B cell (primary cell): ENCODE measurements at regions of chr3 and their contacts with region 1.

Region 1: DNA sequence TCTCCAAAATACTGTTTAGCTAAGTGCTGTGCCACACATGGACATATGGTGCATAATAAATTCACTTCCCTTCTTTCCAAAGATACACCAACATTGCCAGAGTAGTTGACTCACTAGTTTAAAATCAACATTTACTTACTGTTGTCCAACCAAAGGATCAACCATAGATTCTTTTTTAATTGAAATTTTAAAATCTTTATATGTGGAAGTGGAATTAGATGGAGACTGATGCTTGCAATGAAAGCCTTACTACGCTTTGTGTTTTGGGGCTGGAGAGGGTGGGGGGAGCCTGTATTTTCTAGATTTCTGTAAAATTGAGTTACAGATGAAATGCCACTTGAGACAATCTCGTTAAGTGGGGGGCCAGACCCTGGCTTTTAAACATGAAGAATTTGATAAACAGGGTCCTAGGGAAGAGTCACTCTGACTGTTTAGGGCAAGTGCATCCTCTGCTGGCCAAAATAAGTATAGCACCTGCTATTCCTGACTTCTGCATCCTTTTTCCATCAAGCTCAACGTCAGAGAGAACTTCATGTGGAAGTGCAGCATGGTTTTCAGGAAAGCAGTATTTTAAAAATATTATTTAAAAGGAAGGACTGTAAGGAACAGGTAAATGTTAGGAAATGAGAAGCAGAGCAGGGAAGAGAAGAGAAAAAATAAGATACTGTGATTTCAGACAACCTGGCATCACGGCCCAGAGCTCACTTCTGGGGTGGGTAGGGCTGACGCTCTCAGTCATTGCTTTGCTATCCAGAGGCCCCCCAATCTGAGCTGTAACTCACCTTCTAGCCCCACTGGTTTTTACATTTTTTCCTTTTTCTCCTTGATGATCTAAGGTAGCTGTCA is 76.7 kb downstream of the BOC start:
- DNase-seq: peak; percentile 69
- ATAC-seq: peak; percentile 69
- H3K4me3 ChIP-seq: no peak overlapping the region
- H3K4me3 Mint-ChIP-seq: no peak overlapping the region
- H3K27ac ChIP-seq: no peak overlapping the region
- H3K27ac Mint-ChIP-seq: no peak overlapping the region
- H3K4me1 ChIP-seq: no peaks in the 10 kb centered on the region
- H3K4me1 Mint-ChIP-seq: no peaks in the 10 kb centered on the region
- H3K27me3 ChIP-seq: no peaks in the 10 kb centered on the region
- H3K27me3 Mint-ChIP-seq: no peaks in the 10 kb centered on the region
- CTCF ChIP-seq: peak; percentile 100

Region 2: DNA sequence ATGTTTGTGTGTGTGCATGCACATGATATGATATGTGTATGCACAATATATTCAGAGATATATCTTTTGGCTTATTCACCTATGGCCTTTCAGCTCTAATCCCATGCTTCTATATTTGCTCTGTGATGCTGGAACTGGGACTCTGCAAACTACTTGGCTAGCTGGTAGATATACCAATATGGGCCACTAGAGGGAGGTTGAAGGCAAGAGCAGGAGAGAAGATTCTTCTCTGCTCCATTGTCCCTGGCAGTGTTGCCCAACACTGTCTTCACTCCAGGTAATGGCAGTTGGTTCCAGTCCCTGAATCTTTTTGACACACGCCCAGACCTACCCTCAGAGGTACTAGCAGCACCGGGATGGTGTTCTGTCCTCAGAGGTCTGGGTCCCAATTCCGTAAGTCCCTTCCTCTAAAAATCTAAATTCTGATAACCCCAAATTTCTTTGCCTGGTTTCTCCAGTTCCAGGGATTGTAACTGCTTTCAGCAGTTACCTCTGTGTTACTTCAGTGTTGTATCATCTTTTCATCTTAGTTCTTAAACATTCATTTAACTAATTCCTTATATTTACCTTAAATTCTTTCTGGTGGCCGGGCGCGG is 252.5 kb before region 1 on chr3:
- CTCF ChIA-PET with region 1: interaction called, 18 read pairs
- POLR2A ChIA-PET with region 1: no interaction called
- intact Hi-C with region 1: no loop called
- DNase-seq: peak; percentile 66
- ATAC-seq: peak; percentile 76
- H3K4me3 ChIP-seq: no peak overlapping the region
- H3K4me3 Mint-ChIP-seq: no peak overlapping the region
- H3K27ac ChIP-seq: no peak overlapping the region
- H3K27ac Mint-ChIP-seq: no peak overlapping the region
- H3K4me1 ChIP-seq: no peaks in the 10 kb centered on the region
- H3K4me1 Mint-ChIP-seq: no peaks in the 10 kb centered on the region
- H3K27me3 ChIP-seq: no peaks in the 10 kb centered on the region
- H3K27me3 Mint-ChIP-seq: no peaks in the 10 kb centered on the region
- CTCF ChIP-seq: peak; percentile 88

Region 3: DNA sequence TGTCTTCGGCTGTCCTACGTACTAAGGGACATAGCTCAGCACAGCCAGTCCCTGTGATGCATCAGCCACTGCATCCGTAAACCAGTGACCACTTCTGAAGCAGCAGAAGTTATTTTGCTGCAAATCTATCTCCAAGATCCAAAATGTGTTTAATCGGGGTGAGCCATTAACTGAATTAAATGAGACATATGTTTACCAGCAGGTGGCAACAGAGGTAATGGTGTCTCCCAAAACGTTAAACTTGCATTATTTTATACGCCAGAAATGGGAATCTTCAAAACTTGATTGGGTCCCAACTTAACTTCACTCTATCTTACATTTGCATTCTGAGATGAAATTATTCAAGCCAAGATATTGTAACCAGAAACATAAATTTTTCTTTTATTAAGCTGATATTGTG is 152.0 kb before region 1 on chr3:
- CTCF ChIA-PET with region 1: interaction called, 29 read pairs
- POLR2A ChIA-PET with region 1: no interaction called
- intact Hi-C with region 1: loop called (anchors 1 kb)
- DNase-seq: peak; percentile 20
- ATAC-seq: no peak
- H3K4me3 ChIP-seq: no peak overlapping the region
- H3K4me3 Mint-ChIP-seq: no peak overlapping the region
- H3K27ac ChIP-seq: no peak overlapping the region
- H3K27ac Mint-ChIP-seq: no peak overlapping the region
- H3K4me1 ChIP-seq: no peaks in the 10 kb centered on the region
- H3K4me1 Mint-ChIP-seq: no peaks in the 10 kb centered on the region
- H3K27me3 ChIP-seq: no peaks in the 10 kb centered on the region
- H3K27me3 Mint-ChIP-seq: no peaks in the 10 kb centered on the region
- CTCF ChIP-seq: peak; percentile 42

Region 4: DNA sequence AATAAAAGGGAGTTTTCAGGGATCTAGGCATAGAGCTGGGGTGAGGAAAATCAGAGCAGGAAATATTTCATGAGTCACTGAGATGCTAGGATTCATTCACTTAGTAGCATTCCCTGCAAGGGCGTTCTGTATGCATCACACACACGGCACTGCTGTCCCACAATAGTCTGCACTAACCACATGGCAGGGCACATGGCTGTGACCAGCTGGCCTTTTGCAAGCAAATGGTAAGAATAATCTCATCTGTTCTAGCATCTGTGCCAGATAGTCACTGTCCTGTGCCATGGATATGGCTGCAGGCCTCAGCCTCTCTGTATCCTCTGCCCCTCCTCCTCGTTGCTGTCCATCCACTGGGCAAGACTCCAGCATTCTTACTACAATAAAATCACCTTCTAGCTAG is 38.9 kb before region 1 on chr3:
- CTCF ChIA-PET with region 1: no interaction called
- POLR2A ChIA-PET with region 1: no interaction called
- intact Hi-C with region 1: no loop called
- DNase-seq: no peak
- ATAC-seq: no peak
- H3K4me3 ChIP-seq: no peak overlapping the region
- H3K4me3 Mint-ChIP-seq: no peak overlapping the region
- H3K27ac ChIP-seq: no peak overlapping the region
- H3K27ac Mint-ChIP-seq: no peak overlapping the region
- H3K4me1 ChIP-seq: peaks cover 0 to 7% of the 10 kb centered on the region in 2 donors
- H3K4me1 Mint-ChIP-seq: peaks cover 7% of the 10 kb centered on the region
- H3K27me3 ChIP-seq: peaks cover 0 to 2% (median 0%) of the 10 kb centered on the region in 4 experiments
- H3K27me3 Mint-ChIP-seq: peaks cover 26% of the 10 kb centered on the region
- CTCF ChIP-seq: no peak

Region 5: GRCh38 chr3:113275929-113276750 is 11.9 kb before region 1 on chr3:
- CTCF ChIA-PET with region 1: interaction called, 35 read pairs
- POLR2A ChIA-PET with region 1: no interaction called
- intact Hi-C with region 1: no loop called
- DNase-seq: peak; percentile 53
- ATAC-seq: peak; percentile 74
- H3K4me3 ChIP-seq: peak overlapping the region in 4 of 5 experiments; percentile 20 to 50 (median 42)
- H3K4me3 Mint-ChIP-seq: peak overlapping the region; percentile 89
- H3K27ac ChIP-seq: peak overlapping the region; percentile 60 to 63
- H3K27ac Mint-ChIP-seq: peak overlapping the region; percentile 92
- H3K4me1 ChIP-seq: peaks cover 28 to 38% of the 10 kb centered on the region in 2 donors
- H3K4me1 Mint-ChIP-seq: peaks cover 38% of the 10 kb centered on the region
- H3K27me3 ChIP-seq: no peaks in the 10 kb centered on the region
- H3K27me3 Mint-ChIP-seq: no peaks in the 10 kb centered on the region
- CTCF ChIP-seq: no peak